ENCODE measurements at regions of chr6 and their contacts with region 1.

Region 1: DNA sequence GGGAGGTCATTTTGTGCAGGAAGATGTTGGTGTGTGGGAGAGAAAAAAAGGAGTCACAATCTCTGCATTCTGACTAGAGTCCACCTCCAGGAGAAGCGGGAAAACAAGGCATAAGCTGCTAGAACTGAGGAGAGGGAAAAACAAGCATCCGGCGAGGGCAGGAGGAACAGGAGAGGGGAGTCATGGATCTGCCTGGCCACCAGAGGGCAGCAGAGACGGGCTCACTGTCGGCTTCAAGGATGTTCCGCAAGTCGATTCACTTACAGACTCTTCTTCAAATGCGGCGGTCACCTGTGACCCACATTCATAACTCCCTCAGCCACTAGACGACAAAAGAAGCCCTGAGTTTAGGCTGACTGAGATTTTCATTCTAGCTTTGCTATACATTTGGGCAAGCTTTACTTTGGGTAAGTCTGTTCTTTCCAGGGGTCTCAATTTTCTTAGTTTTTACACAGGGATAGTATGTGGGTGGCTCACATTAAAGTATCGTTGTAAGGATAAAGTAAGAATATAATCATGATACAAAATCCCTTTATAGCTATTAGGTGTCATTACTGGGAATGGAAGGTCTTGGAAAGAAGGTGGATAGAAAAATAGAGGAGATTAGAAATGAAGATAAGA is 6.6 kb upstream of the BTNL2 start:
- DNase-seq: peak; percentile 84 to 89 (median 85)
- ATAC-seq: peak; percentile 96
- H3K4me3 ChIP-seq: no peak overlapping the region
- H3K4me1 ChIP-seq: peaks cover 11% of the 10 kb centered on the region
- CTCF ChIP-seq: peak; percentile 93

Region 2: DNA sequence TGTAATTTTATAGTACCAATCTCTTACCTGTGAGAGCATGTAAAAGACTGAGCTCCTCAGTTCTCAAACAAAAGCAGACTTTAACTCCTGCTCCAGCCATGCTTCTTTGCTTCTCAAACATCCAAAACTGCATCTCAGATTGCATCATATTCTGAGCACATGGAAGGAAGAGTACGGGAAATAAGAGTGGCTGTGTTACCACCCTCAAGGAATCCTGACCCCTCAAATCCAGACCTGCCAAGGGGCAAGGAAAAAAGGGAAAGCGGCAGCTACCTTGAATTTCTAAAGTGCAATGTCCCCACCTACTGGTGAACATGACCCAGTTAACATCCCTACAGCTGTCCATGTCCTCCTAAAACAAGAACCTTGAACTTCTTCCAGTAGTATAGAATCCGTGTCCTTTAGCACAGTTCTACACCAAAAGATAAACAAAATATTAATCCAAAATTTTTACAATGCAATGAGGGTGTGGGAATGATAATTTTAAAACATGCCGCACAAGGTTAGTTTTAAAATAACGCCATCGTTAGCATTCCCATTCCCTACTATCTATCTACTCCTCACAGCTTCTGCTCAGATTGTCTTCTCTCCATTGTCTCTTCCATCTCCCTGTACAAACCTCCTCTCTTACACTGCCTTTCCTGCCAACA is 287.0 kb after region 1 on chr6:
- intact Hi-C with region 1: loop called in 1 of 2 experiments (anchors 5 kb)
- DNase-seq: peak in 1 of 3 donors; percentile 36
- ATAC-seq: peak; percentile 83
- H3K4me3 ChIP-seq: no peak overlapping the region
- H3K4me1 ChIP-seq: no peaks in the 10 kb centered on the region
- CTCF ChIP-seq: peak; percentile 25

Region 3: DNA sequence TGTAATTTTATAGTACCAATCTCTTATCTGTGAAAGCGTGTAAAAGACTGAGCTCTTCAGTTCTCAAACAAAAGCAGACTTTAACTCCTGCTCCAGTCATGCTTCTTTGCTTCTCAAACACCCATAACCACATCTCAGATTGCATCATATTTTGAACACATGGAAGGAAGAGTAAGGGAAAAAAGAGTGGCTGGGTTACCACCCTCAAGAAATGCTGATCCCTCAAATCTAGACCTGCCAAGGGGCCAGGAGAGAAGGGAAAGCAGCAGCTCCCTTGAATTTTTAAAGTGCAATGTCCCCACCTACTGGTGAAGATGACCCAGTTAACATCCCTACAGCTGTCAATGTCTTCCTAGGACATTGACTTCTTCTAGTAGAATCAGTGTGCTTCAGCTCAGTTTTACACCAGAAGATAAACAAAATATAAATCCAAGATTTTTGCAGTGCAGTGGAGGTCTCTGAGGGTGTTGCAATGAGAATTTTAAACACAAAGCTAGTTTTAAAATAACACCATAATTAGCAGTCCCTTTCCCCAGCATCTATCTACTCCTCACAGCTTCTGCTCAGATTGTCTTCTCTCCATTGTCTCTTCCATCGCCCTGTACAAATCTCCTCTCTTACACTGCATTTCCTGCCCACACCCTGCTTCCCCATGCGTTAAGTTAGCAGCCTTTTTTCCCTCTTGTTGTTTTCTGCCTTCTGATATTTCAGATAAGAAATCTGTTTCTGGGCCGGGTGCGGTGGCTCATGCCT is 372.4 kb after region 1 on chr6:
- intact Hi-C with region 1: loop called in 1 of 2 experiments (anchors 10 kb)
- DNase-seq: peak in 1 of 3 donors; percentile 71
- ATAC-seq: peak; percentile 85
- H3K4me3 ChIP-seq: no peak overlapping the region
- H3K4me1 ChIP-seq: no peaks in the 10 kb centered on the region
- CTCF ChIP-seq: peak; percentile 36

Region 4: GRCh38 chr6:32796848-32797776 is 383.6 kb after region 1 on chr6:
- intact Hi-C with region 1: loop called in 1 of 2 experiments (anchors 5 kb)
- DNase-seq: peak; percentile 66 to 90 (median 81)
- ATAC-seq: peak; percentile 87
- H3K4me3 ChIP-seq: no peak overlapping the region
- H3K4me1 ChIP-seq: no peaks in the 10 kb centered on the region
- CTCF ChIP-seq: peak; percentile 84